Activated naive CD8-positive, alpha-beta T cell treated with anti-CD3 and anti-CD28 coated beads, Interleukin-2, amount 10 ng/mL, durations not matched to agents 7 days and 5 days (primary cell): ENCODE measurements at regions of chr14 and their contacts with region 1.

Region 1: GRCh38 chr14:60091550-60092530 is at the start of gene PCNX4:
- DNase-seq: peak; percentile 89
- ATAC-seq: peak; percentile 95
- H3K4me3 Mint-ChIP-seq: peak within 1 kb of the TSS; percentile 94
- H3K27ac Mint-ChIP-seq: peak within 1 kb of the TSS; percentile 94
- H3K4me1 Mint-ChIP-seq: peaks cover 26% of the 10 kb centered on the region
- H3K27me3 Mint-ChIP-seq: no peaks in the 10 kb centered on the region
- total RNA-seq, gene PCNX4: 34.4 to 35.5 TPM

Region 2: DNA sequence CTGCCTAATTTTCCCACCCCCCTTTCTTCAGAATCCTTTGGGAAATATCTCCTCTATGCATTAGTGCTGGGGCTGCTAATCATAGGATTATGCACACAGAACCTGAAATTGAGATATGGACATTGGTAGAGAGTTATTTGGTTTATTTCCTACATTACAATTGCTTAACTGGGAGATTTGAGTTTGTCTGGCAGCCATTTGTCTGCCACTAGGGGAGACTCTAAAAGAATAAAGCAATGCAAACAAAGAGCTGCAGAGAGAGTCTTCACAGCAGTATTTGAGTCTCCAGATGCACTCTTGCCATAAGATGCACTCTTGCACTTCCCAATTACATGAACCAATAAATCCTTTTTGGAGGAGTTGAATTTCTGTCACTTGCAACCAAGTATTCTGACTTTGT is 12.1 kb before region 1 on chr14:
- POLR2A ChIA-PET with region 1: no interaction called
- DNase-seq: no peak
- ATAC-seq: no peak
- H3K4me3 Mint-ChIP-seq: no peak overlapping the region
- H3K27ac Mint-ChIP-seq: no peak overlapping the region
- H3K4me1 Mint-ChIP-seq: peaks cover 3% of the 10 kb centered on the region
- H3K27me3 Mint-ChIP-seq: no peaks in the 10 kb centered on the region

Region 3: GRCh38 chr14:60151715-60152114 is 59.9 kb after region 1 on chr14:
- POLR2A ChIA-PET with region 1: interaction called, 11 read pairs
- DNase-seq: peak; percentile 48
- ATAC-seq: peak; percentile 95
- H3K4me3 Mint-ChIP-seq: peak overlapping the region; percentile 36
- H3K27ac Mint-ChIP-seq: peak overlapping the region; percentile 78
- H3K4me1 Mint-ChIP-seq: peaks cover 39% of the 10 kb centered on the region
- H3K27me3 Mint-ChIP-seq: no peaks in the 10 kb centered on the region

Region 4: GRCh38 chr14:60248697-60249318 is 157.0 kb after region 1 on chr14 and contains the start of gene PPM1A:
- POLR2A ChIA-PET with region 1: interaction called, 28 read pairs
- DNase-seq: peak; percentile 93
- ATAC-seq: peak; percentile 76
- H3K4me3 Mint-ChIP-seq: peak within 1 kb of the TSS; percentile 90
- H3K27ac Mint-ChIP-seq: peak within 1 kb of the TSS; percentile 99
- H3K4me1 Mint-ChIP-seq: peaks cover 38% of the 10 kb centered on the region
- H3K27me3 Mint-ChIP-seq: no peaks in the 10 kb centered on the region
- total RNA-seq, gene PPM1A: 45.8 to 54.4 TPM